GM18951 (cell line): ENCODE measurements at regions of chr1 and their contacts with region 1.

Region 1: GRCh38 chr1:116147972-116148371 is 36.8 kb downstream of the MAB21L3 start:
- POLR2A ChIP-seq: no peak

Region 2: GRCh38 chr1:115782571-115783281 is 365.2 kb before region 1 on chr1:
- in situ Hi-C with region 1: no loop called
- POLR2A ChIP-seq: no peak

Region 3: GRCh38 chr1:116325922-116326321 is 177.9 kb after region 1 on chr1:
- in situ Hi-C with region 1: loop called (anchors 10 kb)
- POLR2A ChIP-seq: no peak